Astrocyte of the cerebellum (primary cell): ENCODE measurements at regions of chr1 and their contacts with region 1.

Region 1: DNA sequence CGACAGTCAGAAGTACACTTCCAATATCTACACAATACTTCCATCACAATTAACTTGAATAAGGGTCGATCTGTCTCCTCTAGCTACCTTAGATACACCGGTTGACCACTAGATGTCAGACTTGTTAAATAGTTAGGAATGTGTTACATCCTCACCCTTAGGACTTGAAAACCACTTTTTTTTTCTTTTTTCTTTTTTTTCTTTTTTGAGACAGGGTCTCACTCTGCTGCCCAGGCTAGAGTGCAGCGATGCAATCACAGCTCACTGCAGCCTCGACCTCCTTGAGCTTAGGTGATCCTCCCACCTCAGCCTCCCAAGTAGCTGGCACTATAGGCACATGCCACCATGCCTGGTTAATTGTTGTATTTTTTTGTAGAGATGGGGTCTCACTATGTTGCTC is 120.4 kb upstream of the GREM2 start:
- DNase-seq: peak; percentile 40
- H3K4me3 ChIP-seq: no peak overlapping the region
- CTCF ChIP-seq: peak; percentile 65

Region 2: DNA sequence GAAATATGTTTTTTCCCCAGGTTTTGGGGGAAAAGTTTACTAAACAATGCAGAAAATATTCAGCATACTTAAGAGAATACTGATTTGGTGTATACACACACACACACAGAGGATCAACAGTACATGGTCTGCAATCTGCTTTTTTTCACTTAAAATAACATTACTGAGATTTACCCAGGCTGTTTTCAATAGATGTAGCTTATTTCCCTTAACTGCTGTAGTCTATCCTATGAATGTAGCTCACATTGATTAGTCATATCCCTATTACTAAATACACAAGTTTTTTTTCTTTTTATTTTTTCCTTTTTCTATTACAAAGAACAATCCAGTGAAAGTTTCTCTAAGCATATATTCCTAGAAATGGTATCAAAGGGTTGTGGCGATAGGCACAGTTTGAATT is 146.2 kb after region 1 on chr1:
- in situ Hi-C with region 1: no loop called
- DNase-seq: no peak
- H3K4me3 ChIP-seq: no peak overlapping the region
- CTCF ChIP-seq: no peak

Region 3: DNA sequence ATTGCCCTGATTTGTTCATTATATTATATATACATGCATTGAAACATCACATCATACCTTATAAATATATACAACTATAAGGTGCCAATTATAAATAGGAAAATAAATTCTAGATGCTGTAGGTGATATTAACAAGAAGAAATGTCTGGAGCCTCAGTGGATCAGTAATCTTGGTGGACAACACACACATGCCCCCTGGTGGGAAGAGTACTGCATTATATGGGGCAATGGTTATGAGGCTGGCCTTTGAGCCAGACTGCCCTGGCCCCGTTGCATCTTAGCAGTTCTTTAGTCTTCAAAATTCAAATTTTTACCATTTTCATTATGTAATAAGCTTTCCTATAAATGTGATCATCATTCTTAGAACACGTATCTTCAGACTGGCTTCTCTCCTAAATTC is 214.5 kb after region 1 on chr1:
- in situ Hi-C with region 1: loop called (anchors 25 kb)
- DNase-seq: peak; percentile 28
- H3K4me3 ChIP-seq: no peak overlapping the region
- CTCF ChIP-seq: peak; percentile 71